Astrocyte of the cerebellum (primary cell): ENCODE measurements at regions of chr11 and their contacts with region 1.

Region 1: GRCh38 chr11:2870460-2870859 is 15.1 kb downstream of the CDKN1C start:
- DNase-seq: no peak
- H3K4me3 ChIP-seq: no peak overlapping the region
- CTCF ChIP-seq: no peak

Region 2: GRCh38 chr11:2780259-2781058 is 90.0 kb before region 1 on chr11:
- in situ Hi-C with region 1: loop called (anchors 5 kb)
- DNase-seq: no peak
- H3K4me3 ChIP-seq: no peak overlapping the region
- CTCF ChIP-seq: no peak